Calu3 (cell line): ENCODE measurements at regions of chr3 and their contacts with region 1.

Region 1: GRCh38 chr3:138935848-138936740 is 10.8 kb downstream of the FOXL2 start:
- DNase-seq: peak; percentile 94
- H3K4me3 Mint-ChIP-seq: peak overlapping the region; percentile 90
- H3K27ac Mint-ChIP-seq: no peak overlapping the region
- H3K4me1 Mint-ChIP-seq: peaks cover 47% of the 10 kb centered on the region
- H3K27me3 Mint-ChIP-seq: peaks cover 67% of the 10 kb centered on the region
- CTCF ChIP-seq: peak; percentile 99

Region 2: DNA sequence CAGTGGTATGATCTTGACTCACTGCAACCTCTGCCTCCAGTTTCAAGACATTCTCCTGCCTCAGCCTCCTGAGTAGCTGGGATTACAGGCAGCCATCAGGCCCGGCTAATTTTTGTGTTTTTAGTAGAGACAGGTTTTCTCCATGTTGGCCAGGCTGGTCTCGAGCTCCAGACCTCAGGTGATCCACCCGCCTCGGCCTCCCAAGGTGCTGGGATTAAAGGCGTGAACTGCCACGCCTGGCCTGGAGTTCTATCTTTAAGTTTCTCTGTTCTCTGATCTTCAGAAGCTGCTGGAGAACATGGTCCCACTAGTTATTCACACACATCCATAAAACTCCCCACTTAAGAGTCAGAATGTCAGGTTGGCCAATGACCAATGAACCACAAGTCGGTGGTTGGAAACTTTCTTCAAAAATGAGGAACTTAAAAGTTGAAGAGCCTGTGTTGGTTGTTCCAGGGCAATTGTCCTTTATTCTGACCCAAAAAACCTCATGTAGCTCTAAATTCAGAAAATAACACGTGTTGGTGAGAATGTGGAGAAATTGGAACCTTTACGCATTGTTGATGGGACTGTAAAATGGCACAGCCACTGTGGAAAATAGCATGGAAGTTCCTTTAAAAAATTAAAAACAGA is 45.4 kb before region 1 on chr3:
- CTCF ChIA-PET with region 1: no interaction called
- intact Hi-C with region 1: no loop called
- DNase-seq: no peak
- H3K4me3 Mint-ChIP-seq: no peak overlapping the region
- H3K27ac Mint-ChIP-seq: no peak overlapping the region
- H3K4me1 Mint-ChIP-seq: peaks cover 12% of the 10 kb centered on the region
- H3K27me3 Mint-ChIP-seq: no peaks in the 10 kb centered on the region
- CTCF ChIP-seq: no peak

Region 3: GRCh38 chr3:138923531-138923994 is 12.5 kb before region 1 on chr3:
- CTCF ChIA-PET with region 1: interaction called, 20 read pairs
- intact Hi-C with region 1: no loop called
- DNase-seq: peak; percentile 98
- H3K4me3 Mint-ChIP-seq: no peak overlapping the region
- H3K27ac Mint-ChIP-seq: no peak overlapping the region
- H3K4me1 Mint-ChIP-seq: peaks cover 14% of the 10 kb centered on the region
- H3K27me3 Mint-ChIP-seq: no peaks in the 10 kb centered on the region
- CTCF ChIP-seq: peak; percentile 90

Region 4: GRCh38 chr3:138974462-138974861 is 38.4 kb after region 1 on chr3:
- CTCF ChIA-PET with region 1: interaction called, 50 read pairs
- intact Hi-C with region 1: loop called (anchors 1 kb)
- DNase-seq: peak; percentile 75
- H3K4me3 Mint-ChIP-seq: no peak overlapping the region
- H3K27ac Mint-ChIP-seq: peak overlapping the region; percentile 12
- H3K4me1 Mint-ChIP-seq: peaks cover 21% of the 10 kb centered on the region
- H3K27me3 Mint-ChIP-seq: no peaks in the 10 kb centered on the region
- CTCF ChIP-seq: no peak

Region 5: DNA sequence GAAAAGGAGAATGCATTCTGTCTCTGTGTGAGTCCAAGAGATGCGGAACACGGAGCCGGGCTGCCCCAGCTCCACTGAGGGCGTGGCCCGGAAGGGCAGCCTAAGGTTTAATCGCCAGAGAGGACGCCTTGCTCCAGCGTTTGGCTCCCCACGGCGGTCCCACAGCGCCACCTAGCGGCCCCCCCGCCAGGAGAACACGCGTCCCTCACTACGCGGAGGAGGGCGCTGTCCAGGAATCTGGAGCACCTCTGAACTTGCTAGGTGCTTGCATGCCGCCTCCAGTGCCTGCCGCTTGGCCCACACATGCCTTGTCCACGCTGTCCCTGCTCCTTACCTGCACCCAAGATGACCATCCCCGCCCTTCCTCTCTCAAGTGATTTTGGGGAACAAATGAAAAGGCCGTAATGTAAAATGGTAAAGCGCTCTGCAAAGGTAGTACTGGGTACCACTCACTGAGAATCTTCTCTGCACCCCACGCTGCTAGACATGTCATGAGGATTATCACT is 393.3 kb after region 1 on chr3:
- CTCF ChIA-PET with region 1: interaction called, 14 read pairs
- intact Hi-C with region 1: loop called (anchors 1 kb)
- DNase-seq: peak; percentile 99
- H3K4me3 Mint-ChIP-seq: peak overlapping the region; percentile 12
- H3K27ac Mint-ChIP-seq: no peak overlapping the region
- H3K4me1 Mint-ChIP-seq: no peaks in the 10 kb centered on the region
- H3K27me3 Mint-ChIP-seq: peaks cover 47% of the 10 kb centered on the region
- CTCF ChIP-seq: peak; percentile 100